Right lobe of liver (tissue), 6 donors: ENCODE measurements at regions of chr5 and their contacts with region 1.

Region 1: GRCh38 chr5:65721720-65722574 is at the starts of genes NLN and SGTB:
- DNase-seq: peak; percentile 92 to 93 (median 93)
- ATAC-seq: peak; percentile 89 to 98 (median 95)
- H3K4me3 ChIP-seq: peak within 1 kb of the TSS; percentile 85 to 91 (median 87)
- H3K27ac ChIP-seq: peak within 1 kb of the TSS; percentile 34 to 79 (median 67)
- H3K4me1 ChIP-seq: peaks cover 0 to 13% (median 0%) of the 10 kb centered on the region in 4 donors
- H3K27me3 ChIP-seq: no peaks in the 10 kb centered on the region
- CTCF ChIP-seq: no peak
- POLR2A ChIP-seq: peak; percentile 57
- total RNA-seq, gene NLN: 28.3 to 68.2 (median 36.7) TPM
- total RNA-seq, gene SGTB: 1.9 to 5.0 (median 3.9) TPM

Region 2: DNA sequence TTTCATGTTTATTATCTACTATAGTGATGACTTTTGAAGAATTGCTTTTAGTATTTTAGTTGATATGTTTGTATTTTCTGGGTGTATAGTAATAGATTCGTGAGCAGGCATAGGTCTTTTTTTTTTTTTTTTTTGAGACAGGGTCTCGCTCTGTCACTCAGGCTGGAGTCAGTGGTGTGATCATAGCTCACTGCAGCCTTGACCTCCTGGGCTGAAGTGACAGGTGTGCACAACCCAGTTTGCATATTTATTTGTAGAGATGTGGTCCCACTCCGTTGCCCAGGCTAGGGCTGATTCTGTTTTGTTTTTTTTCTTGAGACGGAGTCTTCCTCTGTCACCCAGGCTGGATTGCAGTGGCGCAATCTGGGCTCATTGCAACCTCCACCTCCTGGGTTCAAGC is 216.3 kb after region 1 on chr5:
- intact Hi-C with region 1: loop called in 1 of 2 experiments (anchors 10 kb)
- DNase-seq: no peak
- ATAC-seq: no peak
- H3K4me3 ChIP-seq: no peak overlapping the region
- H3K27ac ChIP-seq: no peak overlapping the region
- H3K4me1 ChIP-seq: no peaks in the 10 kb centered on the region
- H3K27me3 ChIP-seq: no peaks in the 10 kb centered on the region
- CTCF ChIP-seq: no peak
- POLR2A ChIP-seq: no peak

Region 3: GRCh38 chr5:66021585-66021984 is 299.6 kb after region 1 on chr5:
- intact Hi-C with region 1: no loop called
- DNase-seq: no peak
- ATAC-seq: no peak
- H3K4me3 ChIP-seq: no peak overlapping the region
- H3K27ac ChIP-seq: no peak overlapping the region
- H3K4me1 ChIP-seq: no peaks in the 10 kb centered on the region
- H3K27me3 ChIP-seq: no peaks in the 10 kb centered on the region
- CTCF ChIP-seq: no peak
- POLR2A ChIP-seq: no peak